CD4-positive, alpha-beta memory T cell (primary cell): ENCODE measurements at regions of chr14 and their contacts with region 1.

Region 1: DNA sequence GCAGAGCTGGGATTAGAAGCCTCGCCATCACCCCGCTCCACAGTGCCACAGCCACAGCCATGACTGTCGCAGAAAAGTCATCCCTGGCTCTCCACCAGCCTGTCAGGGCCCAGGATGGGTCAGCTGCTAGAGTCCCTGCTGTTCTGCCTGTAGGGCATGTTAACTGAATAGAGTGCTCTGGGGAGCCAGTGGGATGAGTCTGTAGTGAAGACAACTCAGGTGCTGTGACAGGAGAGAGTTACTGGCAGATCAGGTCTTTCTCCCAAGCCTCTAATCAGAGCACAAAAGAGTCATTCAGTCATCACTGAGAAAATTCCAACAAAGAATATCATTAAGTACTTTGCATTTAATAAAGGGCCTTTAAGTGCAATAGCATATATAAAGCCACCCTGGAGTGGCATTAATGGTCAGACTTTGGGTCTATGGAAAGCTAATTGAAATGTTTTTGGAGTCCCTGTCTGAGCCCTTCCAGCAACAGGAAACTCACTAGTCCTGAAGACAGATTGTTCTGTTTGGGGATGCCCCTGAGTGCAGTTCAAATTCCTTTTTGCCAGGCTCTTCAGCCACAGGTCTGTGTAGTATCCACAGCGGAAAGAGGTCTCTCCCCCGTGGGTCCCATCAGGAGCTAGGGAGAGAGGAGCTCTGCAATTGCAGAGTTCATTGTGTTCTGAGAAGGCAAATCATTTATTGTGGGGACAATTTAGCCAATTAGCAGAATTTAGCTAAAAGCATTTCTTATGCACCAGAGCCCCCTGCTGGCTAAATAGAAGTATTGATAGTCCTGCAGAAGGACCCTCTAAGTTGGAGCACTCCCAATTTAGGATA is 45.2 kb upstream of the C14orf132 start:
- DNase-seq: peak in 4 of 5 donors; percentile 24 to 37 (median 33)
- H3K4me3 ChIP-seq: no peak overlapping the region
- H3K4me3 Mint-ChIP-seq: no peak overlapping the region
- H3K27ac ChIP-seq: no peak overlapping the region
- H3K27ac Mint-ChIP-seq: no peak overlapping the region
- H3K4me1 ChIP-seq: no peaks in the 10 kb centered on the region
- H3K4me1 Mint-ChIP-seq: no peaks in the 10 kb centered on the region
- H3K27me3 ChIP-seq: peaks cover 8% of the 10 kb centered on the region
- H3K27me3 Mint-ChIP-seq: peaks cover 17 to 35% of the 10 kb centered on the region in 2 donors

Region 2: GRCh38 chr14:95561001-95561412 is 433.0 kb before region 1 on chr14:
- CTCF ChIA-PET with region 1: interaction called, 26 read pairs
- POLR2A ChIA-PET with region 1: no interaction called
- intact Hi-C with region 1: no loop called
- DNase-seq: peak; percentile 69 to 79 (median 78)
- H3K4me3 ChIP-seq: no peak overlapping the region
- H3K4me3 Mint-ChIP-seq: no peak overlapping the region
- H3K27ac ChIP-seq: no peak overlapping the region
- H3K27ac Mint-ChIP-seq: no peak overlapping the region
- H3K4me1 ChIP-seq: no peaks in the 10 kb centered on the region
- H3K4me1 Mint-ChIP-seq: peaks cover 3 to 5% (median 4%) of the 10 kb centered on the region in 4 donors
- H3K27me3 ChIP-seq: no peaks in the 10 kb centered on the region
- H3K27me3 Mint-ChIP-seq: peaks cover 2 to 5% of the 10 kb centered on the region in 2 donors

Region 3: DNA sequence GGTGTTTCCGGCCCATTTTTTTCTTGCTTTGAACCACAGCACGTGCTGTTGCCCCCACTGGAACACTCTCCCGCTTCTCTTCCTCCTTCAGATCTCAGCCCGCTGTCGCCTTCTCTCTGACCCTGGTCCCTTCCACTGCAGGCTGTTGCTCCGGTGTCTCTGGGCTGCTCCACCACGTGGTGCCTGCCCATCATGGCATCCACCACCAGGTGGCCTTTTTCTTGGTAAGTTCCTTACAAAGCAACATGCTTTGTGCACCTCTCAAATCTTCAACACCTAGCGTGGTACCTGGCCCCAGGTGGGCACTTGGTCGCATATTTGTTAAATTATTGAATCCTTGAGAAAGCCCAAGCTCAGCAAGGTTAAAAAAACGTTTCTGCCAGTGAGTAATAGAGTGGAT is 98.3 kb before region 1 on chr14:
- CTCF ChIA-PET with region 1: no interaction called
- POLR2A ChIA-PET with region 1: no interaction called
- intact Hi-C with region 1: loop called (anchors 1 kb)
- DNase-seq: peak in 1 of 5 donors; percentile 11
- H3K4me3 ChIP-seq: no peak overlapping the region
- H3K4me3 Mint-ChIP-seq: no peak overlapping the region
- H3K27ac ChIP-seq: no peak overlapping the region
- H3K27ac Mint-ChIP-seq: peak overlapping the region in 1 of 7 donors; percentile 80
- H3K4me1 ChIP-seq: no peaks in the 10 kb centered on the region
- H3K4me1 Mint-ChIP-seq: no peaks in the 10 kb centered on the region
- H3K27me3 ChIP-seq: no peaks in the 10 kb centered on the region
- H3K27me3 Mint-ChIP-seq: peaks cover 21 to 27% of the 10 kb centered on the region in 2 donors

Region 4: DNA sequence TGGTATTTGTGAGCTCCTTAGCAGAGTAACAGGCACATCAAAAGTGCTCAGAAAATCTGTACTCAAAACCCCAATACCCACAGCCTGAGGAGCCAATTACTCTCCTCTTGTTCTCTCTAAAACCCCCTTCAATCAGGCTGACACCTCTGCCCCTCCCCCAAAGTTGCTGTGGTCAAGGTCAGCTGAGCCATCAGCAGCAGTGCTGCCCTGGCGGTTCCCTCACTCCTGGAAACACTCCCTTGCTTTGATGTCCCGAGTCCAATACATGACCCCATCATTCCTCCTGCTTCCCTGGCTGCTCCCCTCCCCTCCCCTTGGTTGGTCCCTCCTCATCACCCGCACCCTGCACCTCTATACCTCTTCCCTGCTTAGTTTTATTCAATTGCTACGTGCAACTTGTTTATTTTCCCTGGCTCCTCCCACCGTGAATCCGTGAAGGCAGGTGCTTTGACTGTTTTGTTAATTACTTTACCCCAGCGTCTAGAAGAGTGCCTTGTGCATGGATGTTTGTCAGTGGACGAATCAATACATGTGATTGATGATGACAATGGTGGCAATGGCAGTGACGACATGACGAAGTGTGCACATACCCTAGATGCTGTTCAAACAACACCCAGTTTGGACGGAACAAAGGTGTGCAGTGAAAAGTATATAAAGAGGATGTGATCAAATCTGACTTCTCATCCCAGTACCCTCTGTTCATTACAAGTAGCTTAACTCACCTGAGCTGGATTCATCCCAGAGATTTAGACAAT is 11.8 kb before region 1 on chr14:
- CTCF ChIA-PET with region 1: interaction called, 19 read pairs
- POLR2A ChIA-PET with region 1: no interaction called
- intact Hi-C with region 1: no loop called
- DNase-seq: peak in 1 of 5 donors; percentile 22
- H3K4me3 ChIP-seq: no peak overlapping the region
- H3K4me3 Mint-ChIP-seq: no peak overlapping the region
- H3K27ac ChIP-seq: no peak overlapping the region
- H3K27ac Mint-ChIP-seq: no peak overlapping the region
- H3K4me1 ChIP-seq: no peaks in the 10 kb centered on the region
- H3K4me1 Mint-ChIP-seq: no peaks in the 10 kb centered on the region
- H3K27me3 ChIP-seq: peaks cover 10% of the 10 kb centered on the region
- H3K27me3 Mint-ChIP-seq: peaks cover 23 to 30% of the 10 kb centered on the region in 2 donors

Region 5: GRCh38 chr14:96051642-96052540 is 57.9 kb after region 1 on chr14:
- CTCF ChIA-PET with region 1: no interaction called
- POLR2A ChIA-PET with region 1: no interaction called
- intact Hi-C with region 1: loop called (anchors 2 kb)
- DNase-seq: peak in 1 of 5 donors; percentile 12
- H3K4me3 ChIP-seq: no peak overlapping the region
- H3K4me3 Mint-ChIP-seq: no peak overlapping the region
- H3K27ac ChIP-seq: no peak overlapping the region
- H3K27ac Mint-ChIP-seq: peak overlapping the region in 1 of 7 donors; percentile 61
- H3K4me1 ChIP-seq: no peaks in the 10 kb centered on the region
- H3K4me1 Mint-ChIP-seq: no peaks in the 10 kb centered on the region
- H3K27me3 ChIP-seq: no peaks in the 10 kb centered on the region
- H3K27me3 Mint-ChIP-seq: peaks cover 4 to 7% of the 10 kb centered on the region in 2 donors

Region 6: DNA sequence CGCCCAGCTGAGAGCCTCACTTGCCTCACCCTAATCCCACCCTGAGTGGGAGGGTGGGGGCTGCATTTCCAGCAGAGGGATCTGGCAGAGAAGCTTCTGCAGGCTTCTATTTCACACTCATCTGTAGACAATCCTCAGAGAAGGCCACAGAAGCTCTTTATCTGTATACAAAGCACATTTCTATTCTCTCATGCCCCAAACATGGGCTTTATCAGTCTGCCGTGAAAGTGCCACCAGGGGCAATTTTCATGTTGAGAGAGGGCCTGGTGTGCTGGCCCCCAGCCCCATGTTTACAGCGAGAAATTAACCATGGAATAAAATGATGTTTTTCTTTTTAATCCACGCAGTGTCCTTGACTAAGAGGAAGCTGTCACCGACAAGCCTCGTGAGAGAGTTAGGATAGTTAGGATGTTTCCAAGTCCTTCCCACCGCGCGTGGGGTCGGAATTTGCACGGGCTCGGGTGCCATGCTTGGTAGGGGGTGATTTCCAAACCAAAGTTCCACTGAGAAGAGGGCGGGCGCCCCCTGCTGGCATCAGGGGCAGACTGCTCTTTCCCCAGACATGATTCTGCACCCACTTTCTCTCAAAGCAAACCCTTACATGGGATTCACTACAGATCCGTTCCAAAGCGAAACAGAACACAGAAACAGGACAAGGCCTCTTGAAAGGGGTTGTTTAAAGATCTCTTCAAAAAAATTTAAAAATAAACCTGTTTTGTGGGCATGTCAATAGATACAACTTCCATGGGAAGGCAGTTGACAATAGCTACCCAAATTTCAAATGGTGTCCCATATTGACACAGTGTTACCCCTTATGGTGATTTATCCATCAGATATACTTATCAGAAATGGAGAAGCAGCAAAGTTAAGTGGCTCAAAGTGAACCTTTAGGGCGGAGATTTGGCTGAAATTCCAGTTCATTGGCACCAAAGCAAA is 281.5 kb after region 1 on chr14:
- CTCF ChIA-PET with region 1: no interaction called
- POLR2A ChIA-PET with region 1: no interaction called
- intact Hi-C with region 1: loop called (anchors 2 kb)
- DNase-seq: peak; percentile 45 to 59 (median 50)
- H3K4me3 ChIP-seq: no peak overlapping the region
- H3K4me3 Mint-ChIP-seq: no peak overlapping the region
- H3K27ac ChIP-seq: no peak overlapping the region
- H3K27ac Mint-ChIP-seq: no peak overlapping the region
- H3K4me1 ChIP-seq: no peaks in the 10 kb centered on the region
- H3K4me1 Mint-ChIP-seq: peaks cover 0 to 3% (median under 1%) of the 10 kb centered on the region in 4 donors
- H3K27me3 ChIP-seq: no peaks in the 10 kb centered on the region
- H3K27me3 Mint-ChIP-seq: no peaks in the 10 kb centered on the region

Region 7: DNA sequence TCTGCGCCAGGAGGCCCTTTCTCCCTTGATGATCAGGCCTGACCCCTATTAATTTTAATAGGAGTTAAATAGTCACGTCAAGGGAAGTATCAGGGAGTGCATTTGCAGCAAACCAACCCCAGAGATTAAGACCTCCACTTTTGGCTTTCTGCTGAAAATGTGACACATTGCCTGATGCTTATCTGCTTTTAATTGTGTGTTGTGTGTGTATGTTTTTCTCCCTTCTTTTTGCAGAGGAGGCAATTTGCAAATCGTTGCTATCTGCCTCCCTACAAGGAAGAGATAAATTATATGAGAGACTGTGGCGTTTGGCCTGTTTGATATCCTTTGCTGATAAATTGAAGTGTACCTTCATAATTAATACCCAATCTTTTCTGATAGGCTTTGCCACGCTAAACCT is 1626.1 kb after region 1 on chr14:
- CTCF ChIA-PET with region 1: no interaction called
- POLR2A ChIA-PET with region 1: no interaction called
- intact Hi-C with region 1: no loop called
- DNase-seq: peak in 1 of 5 donors; percentile 33
- H3K4me3 ChIP-seq: peak overlapping the region in 1 of 2 donors; percentile 26
- H3K4me3 Mint-ChIP-seq: peak overlapping the region; percentile 60 to 94 (median 85)
- H3K27ac ChIP-seq: peak overlapping the region; percentile 73
- H3K27ac Mint-ChIP-seq: peak overlapping the region; percentile 89 to 99 (median 97)
- H3K4me1 ChIP-seq: peaks cover 45% of the 10 kb centered on the region
- H3K4me1 Mint-ChIP-seq: peaks cover 44 to 67% (median 47%) of the 10 kb centered on the region in 4 donors
- H3K27me3 ChIP-seq: no peaks in the 10 kb centered on the region
- H3K27me3 Mint-ChIP-seq: no peaks in the 10 kb centered on the region